ENCODE measurements at regions of chr6 and their contacts with region 1.

Region 1: GRCh38 chr6:32096394-32097258 is 12.5 kb downstream of the TNXB start:
- DNase-seq: peak in 1 of 2 experiments; percentile 66
- H3K4me3 ChIP-seq: no peak overlapping the region
- H3K27ac ChIP-seq: no peak overlapping the region
- H3K4me1 ChIP-seq: no peaks in the 10 kb centered on the region
- H3K27me3 ChIP-seq: peaks cover 0 to 7% (median 1%) of the 10 kb centered on the region in 4 experiments; a peak in 2 of 7 replicates
- CTCF ChIP-seq: peak; percentile 45 to 70 (median 66); a peak in 3 of 4 replicates
- EP300 ChIP-seq: no peak
- POLR2A ChIP-seq: no peak
- RAD21 ChIP-seq: peak; percentile 21 to 39; a peak in 3 of 4 replicates

Region 2: DNA sequence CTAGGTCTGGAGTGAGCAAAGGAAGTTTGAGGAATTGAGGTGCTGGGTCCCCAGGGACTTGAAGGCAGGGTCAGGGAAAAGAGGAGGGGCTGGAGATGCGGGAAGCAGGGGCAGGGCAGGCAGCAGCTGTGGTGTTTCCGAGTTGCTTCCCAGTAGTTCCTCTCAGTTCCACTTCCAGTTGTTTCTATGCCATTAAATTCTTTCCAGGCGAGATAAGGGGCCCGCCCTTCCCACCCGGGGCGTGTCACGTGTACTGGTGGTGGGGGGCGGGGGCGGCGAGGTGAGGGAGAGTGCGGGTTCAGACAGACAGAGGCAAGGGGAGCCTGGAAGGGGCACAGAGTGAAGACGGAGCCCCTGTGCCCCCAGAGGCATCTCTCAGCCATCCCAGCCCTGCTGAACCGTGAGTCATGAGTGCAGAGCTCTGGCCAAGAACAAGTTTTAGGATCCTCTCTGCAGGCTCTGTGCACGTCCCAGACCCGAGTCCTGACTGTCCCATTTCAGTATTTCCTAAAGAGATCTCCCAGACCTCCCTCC is 11.5 kb after region 1 on chr6:
- CTCF ChIA-PET with region 1: interaction called, 11 read pairs
- POLR2A ChIA-PET with region 1: interaction called, 16 read pairs
- DNase-seq: no peak
- H3K4me3 ChIP-seq: peak overlapping the region in 3 of 4 experiments; percentile 5 to 9 (median 9); a peak in 3 of 8 replicates
- H3K27ac ChIP-seq: no peak overlapping the region
- H3K4me1 ChIP-seq: peaks cover 2 to 13% (median 7%) of the 10 kb centered on the region in 4 experiments
- H3K27me3 ChIP-seq: peaks cover 0 to 11% (median 6%) of the 10 kb centered on the region in 4 experiments; a peak in 5 of 7 replicates
- CTCF ChIP-seq: no peak
- EP300 ChIP-seq: no peak
- POLR2A ChIP-seq: no peak
- RAD21 ChIP-seq: no peak

Region 3: DNA sequence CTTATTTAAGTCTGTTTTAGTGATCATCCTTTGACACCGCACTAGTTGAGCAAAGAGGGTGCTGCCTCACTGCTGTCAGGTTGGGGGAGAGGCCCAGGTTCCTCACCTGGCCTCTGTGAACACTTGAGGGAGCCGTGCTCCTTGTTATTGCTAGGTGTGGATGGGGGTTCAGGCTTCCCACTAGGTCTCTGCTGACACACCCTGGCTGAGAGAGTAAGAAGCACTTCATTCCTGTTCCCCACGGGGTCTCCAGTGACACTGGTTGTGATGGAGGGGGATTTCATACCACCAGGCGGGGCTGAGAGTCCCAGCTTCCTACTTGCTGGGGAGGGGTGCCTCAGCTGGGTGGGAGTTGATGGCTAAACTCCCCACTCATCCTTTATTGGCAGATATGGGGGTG is 138.3 kb after region 1 on chr6:
- CTCF ChIA-PET with region 1: no interaction called
- POLR2A ChIA-PET with region 1: no interaction called
- DNase-seq: peak in 1 of 2 experiments; percentile 19
- H3K4me3 ChIP-seq: no peak overlapping the region
- H3K27ac ChIP-seq: no peak overlapping the region
- H3K4me1 ChIP-seq: no peaks in the 10 kb centered on the region
- H3K27me3 ChIP-seq: no peaks in the 10 kb centered on the region; a peak in 1 of 7 replicates
- CTCF ChIP-seq: peak; percentile 40 to 87 (median 54)
- EP300 ChIP-seq: no peak
- POLR2A ChIP-seq: no peak
- RAD21 ChIP-seq: peak; percentile 71 to 76

Measured in H1 (cell line).